ENCODE measurements at regions of chr3 and their contacts with region 1.

Region 1: GRCh38 chr3:187150599-187150998 is 11.3 kb upstream of the RPL39L start:
- DNase-seq: peak; percentile 47 to 61 (median 55)
- H3K4me3 ChIP-seq: no peak overlapping the region
- H3K4me3 Mint-ChIP-seq: no peak overlapping the region
- H3K27ac ChIP-seq: no peak overlapping the region
- H3K27ac Mint-ChIP-seq: no peak overlapping the region
- H3K4me1 ChIP-seq: no peaks in the 10 kb centered on the region
- H3K4me1 Mint-ChIP-seq: peaks cover 0 to 6% (median under 1%) of the 10 kb centered on the region in 4 donors
- H3K27me3 ChIP-seq: no peaks in the 10 kb centered on the region
- H3K27me3 Mint-ChIP-seq: peaks cover 6 to 13% of the 10 kb centered on the region in 2 donors

Region 2: GRCh38 chr3:187101184-187102072 is 49.2 kb before region 1 on chr3:
- CTCF ChIA-PET with region 1: interaction called, 22 read pairs
- POLR2A ChIA-PET with region 1: interaction called, 3 read pairs
- intact Hi-C with region 1: no loop called
- DNase-seq: peak; percentile 43 to 57 (median 48)
- H3K4me3 ChIP-seq: peak overlapping the region; percentile 17 to 27
- H3K4me3 Mint-ChIP-seq: peak overlapping the region; percentile 70 to 91 (median 84)
- H3K27ac ChIP-seq: peak overlapping the region; percentile 18
- H3K27ac Mint-ChIP-seq: peak overlapping the region; percentile 4 to 93 (median 88)
- H3K4me1 ChIP-seq: peaks cover 23% of the 10 kb centered on the region
- H3K4me1 Mint-ChIP-seq: peaks cover 26 to 35% (median 28%) of the 10 kb centered on the region in 4 donors
- H3K27me3 ChIP-seq: no peaks in the 10 kb centered on the region
- H3K27me3 Mint-ChIP-seq: no peaks in the 10 kb centered on the region

Region 3: DNA sequence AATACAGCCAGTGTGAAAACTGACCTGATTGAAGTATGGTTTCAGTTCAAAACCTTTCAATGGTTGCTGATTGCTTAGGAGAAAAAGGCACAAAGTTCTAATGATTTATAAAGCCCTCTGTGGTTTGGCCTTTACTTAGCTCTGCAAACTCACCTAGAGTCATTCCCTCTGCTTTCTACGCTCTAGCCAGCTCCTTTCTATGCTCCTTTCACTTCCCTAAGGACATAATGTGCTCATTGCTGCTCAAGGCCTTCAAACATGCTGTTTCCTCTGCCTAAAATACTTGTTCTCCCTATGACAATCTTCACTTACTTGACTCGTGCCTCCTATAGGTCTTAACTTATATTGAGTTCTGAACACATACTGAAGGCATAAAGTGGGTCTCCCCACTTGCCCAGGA is 30.3 kb before region 1 on chr3:
- CTCF ChIA-PET with region 1: interaction called, 235 read pairs
- POLR2A ChIA-PET with region 1: interaction called, 28 read pairs
- intact Hi-C with region 1: no loop called
- DNase-seq: no peak
- H3K4me3 ChIP-seq: no peak overlapping the region
- H3K4me3 Mint-ChIP-seq: no peak overlapping the region
- H3K27ac ChIP-seq: no peak overlapping the region
- H3K27ac Mint-ChIP-seq: peak overlapping the region in 1 of 7 donors; percentile 19
- H3K4me1 ChIP-seq: no peaks in the 10 kb centered on the region
- H3K4me1 Mint-ChIP-seq: no peaks in the 10 kb centered on the region
- H3K27me3 ChIP-seq: no peaks in the 10 kb centered on the region
- H3K27me3 Mint-ChIP-seq: no peaks in the 10 kb centered on the region

Region 4: GRCh38 chr3:187125319-187126031 is 25.1 kb before region 1 on chr3:
- CTCF ChIA-PET with region 1: interaction called, 178 read pairs
- POLR2A ChIA-PET with region 1: no interaction called
- intact Hi-C with region 1: loop called (anchors 1 kb)
- DNase-seq: no peak
- H3K4me3 ChIP-seq: no peak overlapping the region
- H3K4me3 Mint-ChIP-seq: no peak overlapping the region
- H3K27ac ChIP-seq: no peak overlapping the region
- H3K27ac Mint-ChIP-seq: no peak overlapping the region
- H3K4me1 ChIP-seq: peaks cover 11% of the 10 kb centered on the region
- H3K4me1 Mint-ChIP-seq: peaks cover 10 to 21% (median 16%) of the 10 kb centered on the region in 4 donors
- H3K27me3 ChIP-seq: no peaks in the 10 kb centered on the region
- H3K27me3 Mint-ChIP-seq: no peaks in the 10 kb centered on the region

Region 5: DNA sequence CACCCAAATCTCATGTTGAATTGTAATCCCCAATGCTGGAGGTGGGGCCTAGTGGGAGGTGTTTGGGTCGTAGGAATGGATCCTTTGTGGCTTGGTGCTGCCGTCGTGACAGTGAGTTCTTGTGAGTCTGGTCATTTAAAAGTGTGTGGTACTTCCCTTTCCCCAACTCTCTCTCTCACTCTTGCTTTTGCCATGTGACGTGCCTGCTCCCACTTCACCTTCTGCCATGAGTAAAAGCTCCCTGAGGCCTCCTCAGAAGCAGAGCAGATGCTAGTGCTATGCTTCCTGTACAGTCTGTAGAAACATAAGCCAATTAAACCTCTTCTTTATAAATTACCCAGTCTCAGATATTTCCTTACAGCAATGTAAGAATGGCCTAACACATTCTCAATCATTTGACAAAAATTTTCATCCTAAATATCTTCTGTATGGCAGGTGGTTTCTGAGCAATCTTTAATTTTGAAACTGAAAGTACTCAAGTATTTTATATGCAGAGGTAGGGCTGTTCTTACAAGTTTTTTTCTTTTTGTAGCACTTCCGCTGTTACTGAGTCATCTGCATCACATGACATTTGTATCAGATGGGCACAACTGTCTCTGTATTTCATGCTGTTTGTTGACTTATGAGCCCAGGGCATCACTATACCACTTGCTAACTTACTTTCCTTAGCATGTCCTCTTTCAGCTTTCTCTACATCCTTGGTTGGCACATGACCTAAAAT is 20.1 kb before region 1 on chr3:
- CTCF ChIA-PET with region 1: interaction called, 178 read pairs
- POLR2A ChIA-PET with region 1: no interaction called
- intact Hi-C with region 1: loop called (anchors 1 kb)
- DNase-seq: peak; percentile 74 to 86 (median 83)
- H3K4me3 ChIP-seq: peak overlapping the region in 1 of 2 donors; percentile 37
- H3K4me3 Mint-ChIP-seq: peak overlapping the region; percentile 22 to 82 (median 74)
- H3K27ac ChIP-seq: peak overlapping the region; percentile 74
- H3K27ac Mint-ChIP-seq: peak overlapping the region; percentile 93 to 99 (median 98)
- H3K4me1 ChIP-seq: peaks cover 26% of the 10 kb centered on the region
- H3K4me1 Mint-ChIP-seq: peaks cover 16 to 39% (median 27%) of the 10 kb centered on the region in 4 donors
- H3K27me3 ChIP-seq: no peaks in the 10 kb centered on the region
- H3K27me3 Mint-ChIP-seq: no peaks in the 10 kb centered on the region